Right cardiac atrium (tissue), 5 donors: ENCODE measurements at regions of chr3 and their contacts with region 1.

Region 1: DNA sequence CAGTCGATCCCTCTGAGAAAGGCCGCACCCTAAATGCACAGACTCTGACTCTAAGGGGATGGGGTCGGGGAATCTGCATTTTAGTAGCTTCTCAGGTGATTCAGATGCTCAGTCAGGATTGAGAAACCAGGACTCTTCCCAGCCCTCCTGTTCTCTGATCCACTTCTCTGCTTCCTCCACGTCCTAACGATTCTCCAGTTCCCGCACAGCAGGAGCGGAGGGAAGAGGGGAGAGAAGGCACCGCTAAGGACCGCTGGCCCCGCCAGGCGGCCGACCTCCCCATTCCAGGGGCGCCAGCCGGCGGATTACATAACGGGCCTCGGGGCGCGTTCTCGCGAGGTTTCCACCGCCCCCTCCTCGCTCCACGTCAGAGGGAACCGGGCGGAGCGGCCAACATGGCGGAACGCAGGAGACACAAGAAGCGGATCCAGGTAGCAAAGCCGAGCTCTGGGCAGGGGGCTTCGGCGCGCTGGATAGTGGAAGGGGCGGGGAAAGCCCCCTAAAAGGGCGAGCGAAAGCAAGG is at the start of gene SEC62:
- DNase-seq: peak; percentile 95 to 98 (median 98)
- ATAC-seq: peak; percentile 99
- H3K4me3 ChIP-seq: peak within 1 kb of the TSS; percentile 88
- H3K27ac ChIP-seq: peak within 1 kb of the TSS; percentile 89
- H3K4me1 ChIP-seq: no peaks in the 10 kb centered on the region
- H3K27me3 ChIP-seq: no peaks in the 10 kb centered on the region
- total RNA-seq, gene SEC62: 90.0 to 99.7 (median 97.2) TPM

Region 2: DNA sequence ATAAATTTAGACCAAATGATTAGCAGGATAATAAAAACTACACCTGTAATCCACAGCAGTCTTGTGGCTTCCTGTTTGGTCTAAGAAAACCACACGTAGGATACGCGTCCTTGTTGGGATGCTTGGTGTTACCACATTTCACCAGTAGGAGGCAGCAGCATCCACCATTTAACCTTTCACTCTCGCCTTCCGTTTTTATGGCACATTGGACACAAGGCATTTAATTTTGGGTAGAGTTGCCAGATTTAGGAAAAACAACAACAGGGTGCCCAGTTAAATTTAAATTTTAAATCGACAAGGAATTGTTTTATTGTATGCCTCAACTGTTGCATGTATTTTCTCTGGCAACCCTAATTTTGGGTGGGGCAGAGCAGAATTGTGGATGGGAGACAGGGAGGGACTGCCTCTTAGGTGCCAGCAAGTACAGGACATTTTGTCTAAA is 103.0 kb before region 1 on chr3:
- intact Hi-C with region 1: loop called in 3 of 4 experiments (anchors 5 to 10 kb)
- DNase-seq: peak in 2 of 3 donors; percentile 28 to 72
- ATAC-seq: peak; percentile 72 to 77
- H3K4me3 ChIP-seq: no peak overlapping the region
- H3K27ac ChIP-seq: no peak overlapping the region
- H3K4me1 ChIP-seq: no peaks in the 10 kb centered on the region
- H3K27me3 ChIP-seq: no peaks in the 10 kb centered on the region

Region 3: GRCh38 chr3:169886671-169887070 is 79.8 kb before region 1 on chr3:
- intact Hi-C with region 1: loop called in 1 of 4 experiments (anchors 10 kb)
- DNase-seq: peak; percentile 84 to 92 (median 90)
- ATAC-seq: peak; percentile 91 to 95
- H3K4me3 ChIP-seq: no peak overlapping the region
- H3K27ac ChIP-seq: no peak overlapping the region
- H3K4me1 ChIP-seq: no peaks in the 10 kb centered on the region
- H3K27me3 ChIP-seq: no peaks in the 10 kb centered on the region

Region 4: GRCh38 chr3:169931747-169932520 is 34.6 kb before region 1 on chr3:
- intact Hi-C with region 1: no loop called
- DNase-seq: no peak
- ATAC-seq: no peak
- H3K4me3 ChIP-seq: no peak overlapping the region
- H3K27ac ChIP-seq: no peak overlapping the region
- H3K4me1 ChIP-seq: no peaks in the 10 kb centered on the region
- H3K27me3 ChIP-seq: no peaks in the 10 kb centered on the region

Region 5: GRCh38 chr3:170056710-170057454 is 90.4 kb after region 1 on chr3:
- intact Hi-C with region 1: no loop called
- DNase-seq: no peak
- ATAC-seq: no peak
- H3K4me3 ChIP-seq: no peak overlapping the region
- H3K27ac ChIP-seq: no peak overlapping the region
- H3K4me1 ChIP-seq: no peaks in the 10 kb centered on the region
- H3K27me3 ChIP-seq: no peaks in the 10 kb centered on the region

Region 6: DNA sequence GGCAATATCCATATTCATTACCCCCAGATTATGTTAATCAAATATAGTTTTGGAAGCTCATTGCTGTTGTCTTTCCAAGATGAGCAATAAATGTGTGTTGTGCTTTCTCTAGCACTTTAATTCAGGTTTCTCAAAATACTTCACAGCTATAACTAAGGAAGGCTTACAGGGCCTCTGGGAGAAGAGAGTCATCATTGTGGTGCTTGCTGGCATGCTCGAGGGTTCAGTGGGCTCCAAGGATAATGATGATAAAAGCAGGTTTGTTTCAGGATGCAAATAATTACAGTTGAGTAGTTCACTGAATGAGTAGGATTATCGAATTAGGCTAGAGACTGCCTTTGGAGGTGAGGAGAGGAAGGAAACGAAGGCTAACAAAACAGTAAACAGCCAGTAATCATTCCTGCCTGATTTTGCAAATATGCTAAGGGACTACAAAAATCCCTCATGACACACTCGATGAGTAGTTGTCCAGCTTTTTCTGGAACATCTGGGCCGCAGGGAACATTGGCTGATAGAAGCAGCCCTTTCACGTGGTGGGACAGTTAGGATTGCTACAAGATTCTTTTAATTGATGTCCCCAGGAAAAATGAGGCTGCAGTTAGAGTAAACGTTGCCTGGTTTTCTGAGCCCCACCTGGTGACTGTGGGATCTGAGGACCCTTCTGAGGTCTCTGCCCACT is 565.3 kb after region 1 on chr3:
- intact Hi-C with region 1: no loop called
- DNase-seq: peak in 1 of 3 donors; percentile 21
- ATAC-seq: no peak
- H3K4me3 ChIP-seq: no peak overlapping the region
- H3K27ac ChIP-seq: no peak overlapping the region
- H3K4me1 ChIP-seq: no peaks in the 10 kb centered on the region
- H3K27me3 ChIP-seq: no peaks in the 10 kb centered on the region